ENCODE measurements at regions of chr22 and their contacts with region 1.

Region 1: GRCh38 chr22:28442264-28442710 is 237.4 kb downstream of the TTC28 start:
- DNase-seq: peak; percentile 59
- H3K4me3 ChIP-seq: peak overlapping the region; percentile 28 to 74 (median 46)
- H3K27ac ChIP-seq: no peak overlapping the region
- H3K4me1 ChIP-seq: peaks cover 25% of the 10 kb centered on the region
- H3K27me3 ChIP-seq: no peaks in the 10 kb centered on the region
- CTCF ChIP-seq: peak; percentile 62 to 78
- POLR2A ChIP-seq: no peak

Region 2: GRCh38 chr22:28019881-28020871 is 422.1 kb before region 1 on chr22:
- CTCF ChIA-PET with region 1: interaction called, 17 read pairs
- POLR2A ChIA-PET with region 1: no interaction called
- dilution Hi-C with region 1: no loop called
- intact Hi-C with region 1: loop called (anchors 1 kb)
- DNase-seq: peak; percentile 52
- H3K4me3 ChIP-seq: no peak overlapping the region
- H3K27ac ChIP-seq: no peak overlapping the region
- H3K4me1 ChIP-seq: peaks cover 9% of the 10 kb centered on the region
- H3K27me3 ChIP-seq: no peaks in the 10 kb centered on the region
- CTCF ChIP-seq: peak; percentile 95 to 98
- POLR2A ChIP-seq: no peak

Region 3: GRCh38 chr22:28203286-28203685 is 239.0 kb before region 1 on chr22:
- CTCF ChIA-PET with region 1: no interaction called
- POLR2A ChIA-PET with region 1: no interaction called
- dilution Hi-C with region 1: no loop called
- intact Hi-C with region 1: loop called (anchors 2 kb)
- DNase-seq: peak; percentile 61
- H3K4me3 ChIP-seq: no peak overlapping the region
- H3K27ac ChIP-seq: no peak overlapping the region
- H3K4me1 ChIP-seq: peaks cover 32% of the 10 kb centered on the region
- H3K27me3 ChIP-seq: no peaks in the 10 kb centered on the region
- CTCF ChIP-seq: no peak
- POLR2A ChIP-seq: no peak

Region 4: GRCh38 chr22:28247667-28248363 is 194.5 kb before region 1 on chr22:
- CTCF ChIA-PET with region 1: interaction called, 6 read pairs
- POLR2A ChIA-PET with region 1: no interaction called
- dilution Hi-C with region 1: no loop called
- intact Hi-C with region 1: loop called (anchors 2 kb)
- DNase-seq: no peak
- H3K4me3 ChIP-seq: no peak overlapping the region
- H3K27ac ChIP-seq: no peak overlapping the region
- H3K4me1 ChIP-seq: no peaks in the 10 kb centered on the region
- H3K27me3 ChIP-seq: no peaks in the 10 kb centered on the region
- CTCF ChIP-seq: no peak
- POLR2A ChIP-seq: no peak

Region 5: DNA sequence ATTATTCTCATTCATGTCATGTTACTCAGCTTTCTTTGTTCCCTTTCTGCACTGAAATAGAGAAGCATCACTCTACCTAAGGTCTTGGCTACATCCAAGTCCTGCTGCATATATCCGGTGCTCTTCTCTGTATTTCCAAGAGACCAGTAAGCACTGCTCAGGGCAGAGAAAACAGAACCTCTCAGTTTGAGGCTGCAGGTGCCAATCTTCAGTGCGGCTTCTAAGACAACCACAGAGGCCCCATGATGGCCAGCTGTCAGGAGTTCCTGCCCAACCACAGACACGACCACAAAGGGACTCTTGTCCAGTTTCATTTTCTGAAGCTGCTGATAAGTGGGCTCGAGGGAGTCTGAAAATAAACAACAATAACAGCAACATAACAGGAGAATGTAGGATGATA is 144.8 kb before region 1 on chr22:
- CTCF ChIA-PET with region 1: no interaction called
- POLR2A ChIA-PET with region 1: no interaction called
- dilution Hi-C with region 1: no loop called
- intact Hi-C with region 1: no loop called
- DNase-seq: no peak
- H3K4me3 ChIP-seq: no peak overlapping the region
- H3K27ac ChIP-seq: no peak overlapping the region
- H3K4me1 ChIP-seq: no peaks in the 10 kb centered on the region
- H3K27me3 ChIP-seq: no peaks in the 10 kb centered on the region
- CTCF ChIP-seq: no peak
- POLR2A ChIP-seq: no peak

Region 6: DNA sequence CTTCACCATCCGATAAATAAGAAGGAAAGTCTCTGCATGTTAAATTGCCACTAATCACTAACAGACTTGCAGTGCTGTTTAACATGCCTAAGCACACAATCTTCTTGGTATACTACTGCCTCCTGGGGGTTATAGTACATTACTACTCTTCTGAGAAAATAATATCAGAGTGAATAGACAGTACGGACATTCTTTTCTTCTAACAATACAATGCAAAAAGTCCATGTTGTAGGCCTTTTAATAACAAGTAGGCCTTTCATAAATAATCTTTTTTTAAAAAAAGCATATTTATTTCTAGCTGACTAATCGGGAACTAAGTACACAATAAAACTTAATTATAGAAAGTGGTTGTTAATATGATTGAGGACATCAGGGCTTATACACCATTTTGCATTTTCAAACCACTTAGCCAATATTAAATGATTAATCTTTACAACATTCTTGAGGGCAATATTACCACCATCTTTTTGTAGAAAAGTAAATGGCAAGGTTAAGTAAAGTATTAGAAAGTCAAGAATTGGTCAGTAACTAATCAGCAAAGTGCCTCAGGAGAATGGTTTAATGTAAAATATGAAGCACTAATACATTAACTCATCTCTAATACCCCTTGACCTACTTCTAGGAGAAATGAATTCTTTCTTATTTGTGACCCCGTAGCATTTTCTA is 152.6 kb after region 1 on chr22:
- CTCF ChIA-PET with region 1: no interaction called
- POLR2A ChIA-PET with region 1: no interaction called
- dilution Hi-C with region 1: no loop called
- intact Hi-C with region 1: no loop called
- DNase-seq: peak; percentile 69
- H3K4me3 ChIP-seq: no peak overlapping the region
- H3K27ac ChIP-seq: no peak overlapping the region
- H3K4me1 ChIP-seq: peaks cover 4% of the 10 kb centered on the region
- H3K27me3 ChIP-seq: no peaks in the 10 kb centered on the region
- CTCF ChIP-seq: peak; percentile 46 to 53
- POLR2A ChIP-seq: no peak

Measured in endothelial cell of umbilical vein (primary cell).